Dendritic cell treated with granulocyte-macrophage colony-stimulating factor and Interleukin-4, amounts not matched to agents 40 ng/mL and 50 ng/mL, for 4 days (primary cell): ENCODE measurements at regions of chr17 and their contacts with region 1.

Region 1: DNA sequence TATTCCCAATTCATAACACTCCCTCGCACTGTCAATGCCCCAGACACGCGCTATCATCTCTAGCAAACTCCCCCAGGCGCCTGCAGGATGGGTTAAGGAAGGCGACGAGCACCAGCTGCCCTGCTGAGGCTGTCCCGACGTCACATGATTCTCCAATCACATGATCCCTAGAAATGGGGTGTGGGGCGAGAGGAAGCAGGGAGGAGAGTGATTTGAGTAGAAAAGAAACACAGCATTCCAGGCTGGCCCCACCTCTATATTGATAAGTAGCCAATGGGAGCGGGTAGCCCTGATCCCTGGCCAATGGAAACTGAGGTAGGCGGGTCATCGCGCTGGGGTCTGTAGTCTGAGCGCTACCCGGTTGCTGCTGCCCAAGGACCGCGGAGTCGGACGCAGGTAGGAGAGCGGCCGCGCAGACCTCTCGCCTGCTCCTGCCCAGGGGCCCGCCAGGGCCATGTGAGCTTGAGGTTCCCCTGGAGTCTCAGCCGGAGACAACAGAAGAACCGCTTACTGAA is at the start of gene GRN:
- H3K4me3 Mint-ChIP-seq: peak within 1 kb of the TSS; percentile 98
- H3K27ac Mint-ChIP-seq: peak within 1 kb of the TSS; percentile 98
- H3K4me1 Mint-ChIP-seq: peaks cover 77% of the 10 kb centered on the region
- H3K27me3 Mint-ChIP-seq: no peaks in the 10 kb centered on the region

Region 2: DNA sequence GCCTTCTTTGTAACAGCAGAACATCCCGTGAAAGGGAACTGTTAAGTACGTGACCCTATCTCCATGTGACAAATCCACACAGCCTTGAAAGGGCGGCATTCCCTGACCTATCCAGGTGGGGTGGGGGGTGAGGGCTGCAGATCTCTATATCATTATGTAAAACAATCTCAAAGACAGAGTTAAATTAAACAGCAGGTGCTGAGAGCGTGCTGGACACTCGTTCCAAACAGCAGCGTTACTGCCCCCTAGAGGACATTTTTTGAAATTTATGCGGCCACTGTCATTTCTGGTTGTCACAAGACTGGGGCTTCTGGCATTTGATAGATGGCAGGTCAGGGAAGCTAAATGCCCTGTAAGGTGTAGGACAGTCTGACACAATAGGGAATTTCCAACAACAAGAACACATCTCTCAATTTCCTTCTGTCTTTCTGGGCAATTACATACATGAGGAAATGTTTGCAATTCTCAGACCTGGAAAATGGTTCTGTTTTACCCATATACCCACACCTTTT is 13.7 kb before region 1 on chr17:
- intact Hi-C with region 1: loop called (anchors 2 kb)
- H3K4me3 Mint-ChIP-seq: no peak overlapping the region
- H3K27ac Mint-ChIP-seq: peak overlapping the region; percentile 90
- H3K4me1 Mint-ChIP-seq: peaks cover 56% of the 10 kb centered on the region
- H3K27me3 Mint-ChIP-seq: no peaks in the 10 kb centered on the region